Gastrocnemius medialis (tissue), 4 donors: ENCODE measurements at regions of chr1 and their contacts with region 1.

Region 1: DNA sequence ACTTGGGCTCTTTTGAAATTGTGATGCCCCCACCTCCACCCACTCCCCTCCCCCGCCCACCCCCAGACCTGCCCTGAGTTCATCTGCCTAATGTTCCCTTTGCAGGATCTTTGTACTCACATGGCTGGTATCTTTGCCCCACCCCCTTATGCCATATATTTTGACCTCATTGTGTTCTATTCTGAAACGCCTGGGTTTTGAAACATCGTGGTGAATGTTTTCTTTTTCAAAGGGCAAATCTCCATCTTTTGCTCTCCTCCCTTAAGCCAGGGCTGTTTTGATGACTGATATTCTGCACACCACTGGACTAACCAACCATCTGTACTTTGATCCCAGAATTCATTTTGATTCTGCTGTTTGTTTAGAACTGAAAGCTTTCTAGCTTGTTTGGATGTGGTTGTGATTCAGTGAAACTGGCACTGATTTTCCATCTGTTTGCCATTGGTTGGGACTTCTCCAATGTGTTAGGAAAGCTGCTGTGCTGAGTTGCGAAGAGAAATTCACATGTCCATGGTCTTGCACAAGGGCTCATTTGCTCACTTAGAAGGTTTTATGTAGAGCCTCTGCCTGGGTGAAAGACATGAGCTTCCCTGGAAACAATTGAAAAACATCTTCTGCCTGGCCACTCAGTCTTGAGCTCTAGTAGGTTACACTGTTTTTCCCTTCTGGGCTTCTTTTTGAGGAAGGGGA is 16.5 kb downstream of the SMAP2 start:
- DNase-seq: peak; percentile 56 to 73
- ATAC-seq: peak; percentile 85 to 89
- H3K4me3 ChIP-seq: peak overlapping the region in 2 of 4 donors; percentile 9 to 29
- H3K27ac ChIP-seq: peak overlapping the region; percentile 77 to 90 (median 84)
- H3K4me1 ChIP-seq: peaks cover 36 to 49% of the 10 kb centered on the region in 2 donors
- H3K27me3 ChIP-seq: no peaks in the 10 kb centered on the region
- CTCF ChIP-seq: no peak
- POLR2A ChIP-seq: peak; percentile 33 to 52

Region 2: GRCh38 chr1:40161125-40161887 is 228.7 kb before region 1 on chr1 and contains the start of gene RLF:
- in situ Hi-C with region 1: no loop called
- intact Hi-C with region 1: loop called (anchors 5 kb)
- DNase-seq: peak; percentile 88 to 92
- ATAC-seq: peak; percentile 95 to 97
- H3K4me3 ChIP-seq: peak within 1 kb of the TSS; percentile 73 to 98 (median 89)
- H3K27ac ChIP-seq: peak within 1 kb of the TSS; percentile 92 to 99 (median 96)
- H3K4me1 ChIP-seq: peaks cover 44 to 45% of the 10 kb centered on the region in 2 donors
- H3K27me3 ChIP-seq: no peaks in the 10 kb centered on the region
- CTCF ChIP-seq: no peak
- POLR2A ChIP-seq: peak; percentile 97 to 98
- total RNA-seq, gene RLF: 12.3 to 15.9 (median 15.0) TPM

Region 3: DNA sequence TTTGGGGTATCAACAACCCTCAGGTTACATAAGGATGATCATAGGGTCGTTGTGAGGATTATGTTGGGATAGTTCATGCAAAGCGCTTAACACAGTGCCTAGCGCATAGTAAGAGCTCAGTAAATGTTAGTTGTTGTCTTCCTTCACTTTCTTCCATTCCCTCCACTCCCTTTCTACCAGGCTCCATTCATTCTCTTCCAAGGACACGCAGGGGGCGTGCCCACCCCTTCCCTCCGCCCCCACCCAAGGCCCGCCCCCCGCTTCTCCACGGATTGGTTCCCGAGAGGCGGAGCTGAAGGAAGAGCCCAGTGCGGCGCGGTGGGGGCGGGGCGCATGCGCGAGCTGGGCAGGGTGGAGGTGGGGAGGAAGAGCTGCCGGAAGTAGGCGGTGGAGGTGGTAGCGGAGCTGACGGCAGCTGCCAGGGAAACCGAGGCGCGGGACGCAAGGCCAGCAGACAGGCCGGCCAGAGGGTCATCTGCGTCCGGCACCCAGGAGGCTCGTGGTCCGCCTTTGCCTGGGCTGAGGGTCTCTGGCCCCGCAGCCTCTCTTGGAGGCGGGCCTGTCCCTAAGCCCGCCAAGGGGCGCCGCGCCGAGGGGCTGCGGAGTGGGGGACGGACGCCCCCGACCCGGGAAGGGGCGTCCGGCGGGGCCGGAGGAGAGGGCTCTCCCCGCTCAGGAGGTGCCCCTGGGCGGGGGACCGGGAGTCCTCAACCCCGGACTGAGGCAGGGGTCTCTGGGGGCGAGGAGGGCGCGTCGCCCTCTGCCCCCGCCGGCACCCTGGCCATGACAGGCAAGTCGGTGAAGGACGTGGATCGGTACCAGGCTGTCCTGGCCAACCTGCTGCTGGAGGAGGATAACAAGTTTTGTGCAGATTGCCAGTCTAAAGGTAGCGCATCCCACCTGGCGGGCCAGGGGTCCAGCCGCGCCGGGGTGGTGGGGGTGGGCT is 16.4 kb before region 1 on chr1 and contains the start of gene SMAP2:
- in situ Hi-C with region 1: no loop called
- intact Hi-C with region 1: loop called (anchors 1 kb)
- DNase-seq: peak; percentile 93 to 95
- ATAC-seq: peak; percentile 91 to 94
- H3K4me3 ChIP-seq: peak within 1 kb of the TSS; percentile 90 to 98 (median 95)
- H3K27ac ChIP-seq: peak within 1 kb of the TSS; percentile 82 to 93 (median 86)
- H3K4me1 ChIP-seq: peaks cover 7 to 18% of the 10 kb centered on the region in 2 donors
- H3K27me3 ChIP-seq: no peaks in the 10 kb centered on the region
- CTCF ChIP-seq: no peak
- POLR2A ChIP-seq: peak; percentile 79 to 82
- total RNA-seq, gene SMAP2: 14.9 to 121 (median 47.5) TPM